Activated T-helper 1 cell treated with anti-CD3 and anti-CD28 coated beads, Interleukin-12 subunit alpha, Interleukin-12 subunit beta, Interleukin-2, Interleukin-4 antibody, amounts not matched to agents 30 ng/mL and 10 ng/mL and 1 ng/mL, durations not matched to agents 14 hours and 24 hours and 36 hours (primary cell): ENCODE measurements at regions of chr3 and their contacts with region 1.

Region 1: DNA sequence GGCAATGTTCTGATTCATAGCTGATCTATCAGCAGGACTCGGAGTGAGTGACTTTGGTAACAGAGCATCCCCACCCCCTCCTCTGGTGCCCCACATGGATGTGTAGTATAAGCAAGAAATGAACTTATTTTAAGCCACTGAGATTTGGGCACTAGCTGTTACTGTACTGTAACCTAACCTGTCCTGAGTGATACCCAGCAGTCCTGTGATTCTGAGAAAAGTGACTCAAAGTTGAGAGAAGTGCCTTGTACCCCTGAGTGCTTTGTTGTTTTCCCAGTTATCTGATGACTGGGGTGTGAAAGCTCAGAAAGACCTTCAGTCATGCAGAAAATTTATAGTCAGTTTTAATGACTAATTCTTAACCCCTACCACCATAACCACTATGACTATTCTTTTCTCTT is 439.9 kb upstream of the RBMS3 start:
- DNase-seq: peak; percentile 1
- H3K4me3 Mint-ChIP-seq: no peak overlapping the region
- H3K27ac Mint-ChIP-seq: peak overlapping the region; percentile 56
- H3K4me1 Mint-ChIP-seq: peaks cover 28% of the 10 kb centered on the region
- H3K27me3 Mint-ChIP-seq: no peaks in the 10 kb centered on the region

Region 2: DNA sequence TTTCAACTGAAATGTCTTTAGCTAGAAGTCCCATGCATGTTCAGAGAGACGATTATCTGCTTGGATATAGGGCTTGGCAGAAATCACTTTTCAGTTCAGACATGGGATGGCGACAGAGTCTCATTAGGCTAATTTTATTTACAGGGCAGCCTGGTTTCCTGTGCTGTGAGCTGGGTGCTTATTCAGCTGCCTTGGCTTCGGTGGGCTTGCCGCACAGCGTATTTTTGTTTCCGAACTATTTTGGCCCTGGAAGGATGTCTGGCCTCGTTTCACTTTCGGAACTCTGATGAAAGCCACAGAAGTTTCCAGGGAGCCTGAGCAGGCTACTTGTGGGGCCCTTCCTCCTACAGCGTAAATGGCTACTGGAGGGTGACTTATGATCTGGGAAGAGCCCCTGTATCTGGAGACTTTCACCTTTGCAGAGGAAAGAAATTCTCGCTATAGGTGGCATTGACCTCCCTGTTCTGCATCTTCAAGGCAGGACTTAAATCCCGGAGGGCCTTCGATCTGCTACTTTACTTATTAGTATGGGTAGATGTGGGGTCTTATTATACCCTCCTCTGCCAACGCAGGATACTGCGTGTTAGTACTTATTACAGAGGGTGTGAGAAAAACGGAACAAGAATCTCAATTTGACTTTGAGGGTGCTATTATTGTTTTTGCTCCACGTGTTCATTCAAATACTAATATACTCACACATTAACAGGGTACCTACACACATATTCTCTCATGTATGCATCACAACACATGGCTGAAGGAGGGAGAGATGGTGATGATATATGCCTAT is 75.9 kb after region 1 on chr3:
- intact Hi-C with region 1: no loop called
- DNase-seq: peak; percentile 9
- H3K4me3 Mint-ChIP-seq: no peak overlapping the region
- H3K27ac Mint-ChIP-seq: no peak overlapping the region
- H3K4me1 Mint-ChIP-seq: peaks cover 31% of the 10 kb centered on the region
- H3K27me3 Mint-ChIP-seq: peaks cover 10% of the 10 kb centered on the region

Region 3: GRCh38 chr3:28940530-28940929 is 99.6 kb after region 1 on chr3:
- intact Hi-C with region 1: loop called (anchors 1 kb)
- DNase-seq: no peak
- H3K4me3 Mint-ChIP-seq: peak overlapping the region; percentile 32
- H3K27ac Mint-ChIP-seq: peak overlapping the region; percentile 37
- H3K4me1 Mint-ChIP-seq: peaks cover 38% of the 10 kb centered on the region
- H3K27me3 Mint-ChIP-seq: peaks cover 17% of the 10 kb centered on the region

Region 4: DNA sequence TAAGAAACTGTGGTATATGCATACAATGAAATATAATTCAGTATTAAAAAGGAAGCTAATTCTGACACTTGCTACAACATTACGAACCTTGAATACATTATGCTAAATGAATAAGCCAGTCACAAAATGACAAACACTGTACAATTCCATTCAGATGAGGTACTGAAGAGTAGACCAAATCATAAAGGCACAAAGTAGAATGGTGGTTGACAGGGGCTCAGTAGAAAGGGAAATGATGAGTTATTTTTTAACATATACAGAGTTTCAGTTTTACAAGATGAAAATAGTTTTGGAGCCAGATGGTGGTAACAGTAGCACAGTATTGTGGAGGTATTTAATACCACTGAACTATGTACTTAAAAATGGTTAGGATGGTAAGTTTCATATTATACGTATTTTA is 185.3 kb after region 1 on chr3:
- intact Hi-C with region 1: loop called (anchors 1 kb)
- DNase-seq: no peak
- H3K4me3 Mint-ChIP-seq: no peak overlapping the region
- H3K27ac Mint-ChIP-seq: peak overlapping the region; percentile 7
- H3K4me1 Mint-ChIP-seq: peaks cover 10% of the 10 kb centered on the region
- H3K27me3 Mint-ChIP-seq: no peaks in the 10 kb centered on the region

Region 5: DNA sequence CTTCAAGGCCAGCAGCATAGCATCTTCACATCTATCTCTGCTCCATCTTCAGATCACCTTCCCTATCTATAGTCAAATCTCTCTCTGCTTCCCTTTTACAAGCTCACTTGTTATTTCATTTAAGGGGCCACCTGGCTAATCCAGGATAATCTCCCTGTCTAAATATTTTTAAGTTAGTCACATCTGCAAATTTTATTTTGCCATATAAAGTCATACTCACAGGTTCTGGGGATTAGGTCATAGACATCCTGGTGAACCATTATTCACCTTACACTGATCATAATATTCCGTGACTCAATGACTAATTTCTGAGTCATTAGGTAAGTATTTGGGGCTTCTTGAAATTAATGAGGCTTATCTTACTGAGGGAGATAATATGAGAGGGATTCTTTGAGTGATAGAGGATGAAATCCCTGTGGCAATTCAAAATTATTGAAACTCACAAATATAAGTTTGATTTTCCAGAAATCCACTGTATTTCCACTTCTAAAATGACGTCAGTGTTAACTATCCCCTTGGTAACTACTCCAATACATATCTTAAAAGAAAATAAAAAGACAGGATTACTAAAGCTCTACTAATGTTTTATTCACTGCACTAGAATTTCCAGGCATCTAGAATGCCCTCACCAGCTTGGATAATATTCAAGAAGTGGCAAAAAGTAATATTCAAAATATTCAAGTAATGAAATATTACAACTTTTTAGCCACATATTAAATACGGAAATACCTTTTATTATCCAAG is 346.2 kb after region 1 on chr3:
- intact Hi-C with region 1: loop called (anchors 1 kb)
- DNase-seq: no peak
- H3K4me3 Mint-ChIP-seq: no peak overlapping the region
- H3K27ac Mint-ChIP-seq: peak overlapping the region; percentile 8
- H3K4me1 Mint-ChIP-seq: peaks cover 36% of the 10 kb centered on the region
- H3K27me3 Mint-ChIP-seq: no peaks in the 10 kb centered on the region

Region 6: GRCh38 chr3:30353711-30354467 is 1512.9 kb after region 1 on chr3:
- intact Hi-C with region 1: loop called (anchors 5 kb)
- DNase-seq: peak; percentile 70
- H3K4me3 Mint-ChIP-seq: peak overlapping the region; percentile 27
- H3K27ac Mint-ChIP-seq: peak overlapping the region; percentile 70
- H3K4me1 Mint-ChIP-seq: peaks cover 85% of the 10 kb centered on the region
- H3K27me3 Mint-ChIP-seq: peaks cover 14% of the 10 kb centered on the region